CD8-positive, alpha-beta T cell (primary cell): ENCODE measurements at regions of chr13 and their contacts with region 1.

Region 1: DNA sequence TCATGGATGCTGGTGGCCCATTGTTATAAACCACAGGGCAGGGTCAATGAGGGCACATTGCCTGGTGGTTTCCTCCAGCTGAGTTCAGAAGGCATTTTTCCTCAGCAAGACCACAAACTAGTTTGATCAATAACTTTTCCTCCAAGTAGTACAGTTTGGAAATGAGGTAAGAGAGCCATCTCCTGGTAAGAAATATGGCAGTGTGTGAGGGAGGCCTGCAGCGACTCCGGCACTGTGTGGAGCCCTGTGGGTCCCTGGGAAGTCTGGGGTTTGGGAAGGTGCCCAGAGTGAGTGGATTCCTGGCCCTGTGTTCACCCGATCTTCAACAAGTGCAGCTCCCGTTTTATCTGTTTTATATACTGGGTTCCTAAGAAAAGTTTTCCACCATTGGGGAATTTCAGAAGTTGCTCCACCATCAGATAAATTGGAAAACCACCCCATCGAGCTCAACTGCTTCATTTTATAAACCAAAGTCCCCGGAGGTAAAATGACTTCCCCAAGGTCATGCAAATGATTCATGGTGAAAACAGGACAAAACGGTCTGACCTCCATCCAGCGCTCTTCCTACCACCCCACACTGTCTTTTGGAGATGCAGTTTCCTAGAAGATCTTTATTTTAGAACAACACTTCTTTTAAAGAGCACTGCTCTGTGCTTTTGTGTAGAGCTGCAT is 148.4 kb downstream of the KATNAL1 start:
- DNase-seq: peak in 2 of 9 experiments; percentile 63 to 74
- ATAC-seq: peak; percentile 59
- H3K4me3 ChIP-seq: no peak overlapping the region
- H3K4me3 Mint-ChIP-seq: no peak overlapping the region
- H3K27ac ChIP-seq: peak overlapping the region in 1 of 2 experiments; percentile 18
- H3K27ac Mint-ChIP-seq: peak overlapping the region; percentile 68
- H3K4me1 ChIP-seq: peaks cover 13% of the 10 kb centered on the region
- H3K4me1 Mint-ChIP-seq: peaks cover 30% of the 10 kb centered on the region
- H3K27me3 ChIP-seq: no peaks in the 10 kb centered on the region
- H3K27me3 Mint-ChIP-seq: no peaks in the 10 kb centered on the region
- CTCF ChIP-seq: peak; percentile 32

Region 2: DNA sequence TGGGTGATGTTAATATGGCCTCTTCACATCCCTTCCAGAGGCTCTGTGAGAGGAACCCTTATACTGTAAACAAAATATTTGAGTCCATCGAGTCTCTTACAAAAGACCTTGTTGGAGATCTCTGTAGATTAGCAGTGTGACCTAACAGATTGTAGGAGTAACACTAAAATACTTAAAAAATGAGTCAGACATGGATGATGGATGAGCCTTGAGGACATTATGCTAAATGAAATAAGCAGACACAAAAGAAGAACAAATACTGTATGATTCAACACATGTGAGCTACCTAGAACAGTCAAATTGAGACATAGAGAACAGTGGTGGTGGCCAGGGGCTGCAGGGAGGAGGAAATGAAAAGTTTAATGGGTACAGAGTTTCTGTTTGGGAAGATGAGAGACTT is 156.3 kb before region 1 on chr13:
- CTCF ChIA-PET with region 1: no interaction called
- POLR2A ChIA-PET with region 1: no interaction called
- intact Hi-C with region 1: no loop called
- DNase-seq: no peak
- ATAC-seq: no peak
- H3K4me3 ChIP-seq: no peak overlapping the region
- H3K4me3 Mint-ChIP-seq: no peak overlapping the region
- H3K27ac ChIP-seq: no peak overlapping the region
- H3K27ac Mint-ChIP-seq: no peak overlapping the region
- H3K4me1 ChIP-seq: peaks cover 6% of the 10 kb centered on the region
- H3K4me1 Mint-ChIP-seq: peaks cover 15% of the 10 kb centered on the region
- H3K27me3 ChIP-seq: no peaks in the 10 kb centered on the region
- H3K27me3 Mint-ChIP-seq: no peaks in the 10 kb centered on the region
- CTCF ChIP-seq: no peak

Region 3: DNA sequence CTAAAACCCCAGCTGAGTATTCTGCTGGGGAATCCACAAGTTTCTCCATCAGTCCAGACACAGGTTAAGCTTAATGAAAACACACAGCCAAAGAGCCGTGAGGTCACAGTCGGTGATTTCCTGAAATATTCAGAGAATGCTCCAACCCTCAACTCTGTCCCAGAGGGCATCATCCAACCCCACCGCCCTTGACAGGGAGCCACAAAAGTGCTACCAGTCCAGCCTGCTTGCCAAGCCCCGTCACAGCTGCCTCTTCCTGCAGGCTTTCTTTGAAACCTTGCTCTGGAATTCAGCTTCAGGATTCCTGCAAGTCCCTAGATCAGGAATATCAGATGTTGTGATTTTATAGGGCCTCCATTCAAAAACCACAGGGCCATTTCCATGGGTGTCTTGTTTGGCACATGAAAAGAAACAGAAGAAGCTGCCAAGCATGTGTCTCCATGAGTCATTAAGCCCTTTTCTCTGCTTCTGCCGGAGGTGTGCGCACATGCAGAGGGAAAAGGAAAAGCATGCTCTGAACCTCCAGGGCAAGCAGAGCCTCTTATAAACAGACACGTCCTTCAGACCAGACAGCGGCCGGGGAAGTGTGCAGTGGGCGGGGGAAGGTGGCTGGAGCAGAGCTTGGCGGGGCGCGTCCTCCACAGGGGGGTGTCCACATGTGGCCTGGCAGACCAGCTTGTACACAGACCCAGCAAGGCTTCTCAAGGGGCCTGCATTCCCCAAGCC is 16.3 kb before region 1 on chr13:
- CTCF ChIA-PET with region 1: interaction called, 630 read pairs
- POLR2A ChIA-PET with region 1: interaction called, 8 read pairs
- intact Hi-C with region 1: no loop called
- DNase-seq: peak in 2 of 9 experiments; percentile 38 to 52
- ATAC-seq: peak; percentile 35
- H3K4me3 ChIP-seq: no peak overlapping the region
- H3K4me3 Mint-ChIP-seq: no peak overlapping the region
- H3K27ac ChIP-seq: peak overlapping the region in 1 of 2 experiments; percentile 35
- H3K27ac Mint-ChIP-seq: peak overlapping the region; percentile 64
- H3K4me1 ChIP-seq: peaks cover 38% of the 10 kb centered on the region
- H3K4me1 Mint-ChIP-seq: peaks cover 47% of the 10 kb centered on the region
- H3K27me3 ChIP-seq: no peaks in the 10 kb centered on the region
- H3K27me3 Mint-ChIP-seq: no peaks in the 10 kb centered on the region
- CTCF ChIP-seq: no peak

Region 4: GRCh38 chr13:30224732-30225131 is 65.8 kb after region 1 on chr13:
- CTCF ChIA-PET with region 1: no interaction called
- POLR2A ChIA-PET with region 1: no interaction called
- intact Hi-C with region 1: loop called in 1 of 2 experiments (anchors 2 kb)
- DNase-seq: no peak
- ATAC-seq: no peak
- H3K4me3 ChIP-seq: no peak overlapping the region
- H3K4me3 Mint-ChIP-seq: no peak overlapping the region
- H3K27ac ChIP-seq: no peak overlapping the region
- H3K27ac Mint-ChIP-seq: no peak overlapping the region
- H3K4me1 ChIP-seq: no peaks in the 10 kb centered on the region
- H3K4me1 Mint-ChIP-seq: no peaks in the 10 kb centered on the region
- H3K27me3 ChIP-seq: no peaks in the 10 kb centered on the region
- H3K27me3 Mint-ChIP-seq: no peaks in the 10 kb centered on the region
- CTCF ChIP-seq: no peak